Calu3 (cell line): ENCODE measurements at regions of chrX and their contacts with region 1.

Region 1: GRCh38 chrX:24024819-24025740 is 1.9 kb downstream of the KLHL15 start:
- DNase-seq: peak; percentile 79
- H3K4me3 Mint-ChIP-seq: peak overlapping the region; percentile 65
- H3K27ac Mint-ChIP-seq: no peak overlapping the region
- H3K4me1 Mint-ChIP-seq: peaks cover 8% of the 10 kb centered on the region
- H3K27me3 Mint-ChIP-seq: no peaks in the 10 kb centered on the region
- CTCF ChIP-seq: no peak

Region 2: DNA sequence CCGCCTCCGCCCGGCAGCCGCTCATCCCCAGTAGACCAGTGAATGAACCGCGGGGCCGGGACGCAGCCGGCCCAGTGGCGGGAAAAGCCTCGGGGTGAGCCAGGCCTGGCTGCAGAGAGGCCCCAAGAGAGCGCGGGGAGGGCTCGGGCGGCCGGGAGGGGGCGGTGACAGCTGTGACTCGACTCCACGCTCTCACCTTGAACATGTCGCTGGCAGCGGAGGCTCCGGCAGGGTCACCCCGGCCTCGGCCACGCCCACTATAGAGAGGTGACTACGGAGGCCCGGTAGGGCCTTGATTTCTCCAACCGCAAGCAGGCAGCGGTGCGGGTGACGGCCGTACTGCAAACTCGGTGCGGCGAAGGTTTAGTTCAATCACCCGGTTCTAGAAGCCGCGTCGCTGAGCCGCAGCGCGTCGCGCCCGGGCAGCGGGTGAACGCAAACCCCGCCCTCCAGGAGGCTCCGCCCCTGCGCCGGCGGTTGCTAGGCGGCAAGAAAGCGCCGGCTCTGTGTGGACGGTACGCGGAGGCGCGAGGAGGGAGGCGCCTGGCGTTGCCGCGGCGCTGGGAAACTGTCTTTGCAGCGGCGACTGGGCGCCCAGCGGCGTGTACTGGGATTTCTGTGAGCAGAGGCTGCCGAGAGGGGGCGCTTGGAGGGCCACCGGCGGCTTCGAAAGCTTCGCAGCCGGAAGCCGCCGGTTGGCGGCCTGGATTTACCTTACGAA is 117.4 kb before region 1 on chrX and contains the starts of genes APOO and CXorf58:
- CTCF ChIA-PET with region 1: no interaction called
- intact Hi-C with region 1: no loop called
- DNase-seq: peak; percentile 95
- H3K4me3 Mint-ChIP-seq: peak within 1 kb of the TSS; percentile 74
- H3K27ac Mint-ChIP-seq: no peak within 1 kb of the TSS
- H3K4me1 Mint-ChIP-seq: peaks cover 12% of the 10 kb centered on the region
- H3K27me3 Mint-ChIP-seq: no peaks in the 10 kb centered on the region
- CTCF ChIP-seq: peak; percentile 63
- total RNA-seq, gene APOO: 46.8 and 50.0 TPM in 2 replicates
- total RNA-seq, gene CXorf58: not detected in 2 replicates

Region 3: GRCh38 chrX:23937100-23937499 is 88.0 kb before region 1 on chrX:
- CTCF ChIA-PET with region 1: interaction called, 11 read pairs
- intact Hi-C with region 1: no loop called
- DNase-seq: no peak
- H3K4me3 Mint-ChIP-seq: no peak overlapping the region
- H3K27ac Mint-ChIP-seq: no peak overlapping the region
- H3K4me1 Mint-ChIP-seq: no peaks in the 10 kb centered on the region
- H3K27me3 Mint-ChIP-seq: no peaks in the 10 kb centered on the region
- CTCF ChIP-seq: no peak